ENCODE measurements at regions of chr10 and their contacts with region 1.

Region 1: GRCh38 chr10:101214446-101215396 is 14.5 kb downstream of the LBX1 start:
- DNase-seq: peak; percentile 75 to 85
- H3K4me3 ChIP-seq: peak overlapping the region; percentile 42
- H3K4me3 Mint-ChIP-seq: peak overlapping the region; percentile 81
- H3K27ac Mint-ChIP-seq: no peak overlapping the region
- H3K4me1 ChIP-seq: peaks cover 9% of the 10 kb centered on the region; the same call in 1 of the 2 replicates
- H3K4me1 Mint-ChIP-seq: peaks cover 6% of the 10 kb centered on the region
- H3K27me3 ChIP-seq: peaks cover 1% of the 10 kb centered on the region; the same call in 1 of the 2 replicates
- H3K27me3 Mint-ChIP-seq: peaks cover 25% of the 10 kb centered on the region
- CTCF ChIP-seq: peak; percentile 93 to 98

Region 2: DNA sequence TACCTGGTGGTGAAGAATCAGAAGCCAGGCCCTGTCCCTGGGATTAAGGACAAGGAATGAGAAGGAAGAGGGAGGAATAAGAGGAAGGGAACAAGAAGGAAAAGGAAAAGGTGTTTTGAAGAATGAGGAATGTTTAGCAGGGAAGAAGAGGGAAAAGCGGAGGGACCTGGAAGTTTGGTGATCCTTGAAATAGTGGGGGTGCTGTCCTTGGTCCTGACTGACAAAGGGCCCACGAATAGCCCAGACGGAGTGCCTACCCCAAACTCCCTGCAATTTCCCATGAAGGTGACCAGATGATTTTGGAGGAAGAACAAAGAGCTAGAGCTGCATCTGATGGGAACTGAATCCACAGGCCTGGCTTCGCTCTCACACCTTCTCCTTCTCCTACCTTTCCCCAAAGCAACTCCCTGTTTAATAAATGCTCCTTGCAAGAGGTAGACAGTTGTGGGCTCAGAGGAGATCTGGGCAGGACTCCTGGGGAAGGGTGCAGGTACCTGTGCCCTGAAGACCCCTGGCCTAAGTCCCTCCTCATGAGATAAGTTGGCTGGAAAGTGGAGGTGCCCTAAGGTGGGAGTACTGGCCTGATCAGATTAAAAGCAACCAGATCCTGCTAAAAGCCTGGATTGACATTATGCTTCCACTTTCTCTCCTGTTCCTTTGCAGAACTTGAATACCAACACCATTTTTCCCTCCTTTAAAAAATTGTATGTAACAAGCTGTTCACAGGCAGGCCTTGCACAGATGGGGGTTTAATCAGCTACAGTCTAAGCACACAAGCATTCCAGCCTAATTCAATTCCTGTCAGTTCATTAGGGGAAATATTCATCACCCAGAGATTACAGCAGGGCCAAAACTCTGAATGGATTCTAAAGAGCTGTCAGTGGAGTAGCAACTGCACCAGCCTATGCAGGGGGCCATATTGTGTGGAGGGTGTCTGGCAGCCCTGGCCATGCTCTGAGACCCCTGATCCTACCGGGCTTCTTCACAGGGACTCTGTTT is 133.5 kb before region 1 on chr10:
- CTCF ChIA-PET with region 1: no interaction called
- POLR2A ChIA-PET with region 1: no interaction called
- intact Hi-C with region 1: no loop called
- DNase-seq: peak in 1 of 2 experiments; percentile 63
- H3K4me3 ChIP-seq: no peak overlapping the region
- H3K4me3 Mint-ChIP-seq: no peak overlapping the region
- H3K27ac Mint-ChIP-seq: no peak overlapping the region
- H3K4me1 ChIP-seq: no peaks in the 10 kb centered on the region
- H3K4me1 Mint-ChIP-seq: no peaks in the 10 kb centered on the region
- H3K27me3 ChIP-seq: no peaks in the 10 kb centered on the region; the same call in 1 of the 2 replicates
- H3K27me3 Mint-ChIP-seq: peaks cover 9% of the 10 kb centered on the region
- CTCF ChIP-seq: no peak

Region 3: GRCh38 chr10:101161494-101162299 is 53.0 kb before region 1 on chr10:
- CTCF ChIA-PET with region 1: interaction called, 4 read pairs
- POLR2A ChIA-PET with region 1: no interaction called
- intact Hi-C with region 1: loop called (anchors 1 kb)
- DNase-seq: peak; percentile 63 to 79
- H3K4me3 ChIP-seq: no peak overlapping the region
- H3K4me3 Mint-ChIP-seq: no peak overlapping the region
- H3K27ac Mint-ChIP-seq: no peak overlapping the region
- H3K4me1 ChIP-seq: peaks cover 13% of the 10 kb centered on the region
- H3K4me1 Mint-ChIP-seq: peaks cover 7% of the 10 kb centered on the region
- H3K27me3 ChIP-seq: no peaks in the 10 kb centered on the region; the same call in 1 of the 2 replicates
- H3K27me3 Mint-ChIP-seq: peaks cover 13% of the 10 kb centered on the region
- CTCF ChIP-seq: peak; percentile 96 to 97

Region 4: GRCh38 chr10:101291331-101292193 is 76.8 kb after region 1 on chr10:
- CTCF ChIA-PET with region 1: interaction called, 26 read pairs
- POLR2A ChIA-PET with region 1: interaction called, 6 read pairs
- intact Hi-C with region 1: loop called (anchors 1 kb)
- DNase-seq: peak; percentile 67 to 73
- H3K4me3 ChIP-seq: peak overlapping the region; percentile 45
- H3K4me3 Mint-ChIP-seq: peak overlapping the region; percentile 69
- H3K27ac Mint-ChIP-seq: no peak overlapping the region
- H3K4me1 ChIP-seq: peaks cover 4% of the 10 kb centered on the region; the same call in 1 of the 2 replicates
- H3K4me1 Mint-ChIP-seq: no peaks in the 10 kb centered on the region
- H3K27me3 ChIP-seq: peaks cover 5% of the 10 kb centered on the region
- H3K27me3 Mint-ChIP-seq: peaks cover 22% of the 10 kb centered on the region
- CTCF ChIP-seq: peak; percentile 85 to 92

Region 5: DNA sequence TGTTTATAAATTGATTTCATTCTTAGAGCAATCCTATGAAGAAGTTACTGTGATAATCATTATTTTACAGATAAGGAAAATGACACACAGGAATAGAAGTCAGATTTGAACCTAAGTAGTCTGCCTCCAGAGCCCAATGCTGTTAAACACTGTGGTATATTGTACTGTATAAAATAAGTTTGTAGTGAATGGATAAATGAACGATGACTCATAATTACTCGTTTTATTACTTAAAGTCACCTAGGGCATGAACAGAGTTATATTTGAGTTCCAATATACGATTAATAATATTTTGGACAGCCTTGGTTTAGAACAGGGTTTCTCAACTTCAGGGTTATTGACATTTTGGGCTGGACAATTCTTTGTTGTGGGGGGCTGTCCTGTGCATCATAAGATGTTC is 131.5 kb after region 1 on chr10:
- CTCF ChIA-PET with region 1: no interaction called
- POLR2A ChIA-PET with region 1: no interaction called
- intact Hi-C with region 1: no loop called
- DNase-seq: no peak
- H3K4me3 ChIP-seq: no peak overlapping the region
- H3K4me3 Mint-ChIP-seq: no peak overlapping the region
- H3K27ac Mint-ChIP-seq: no peak overlapping the region
- H3K4me1 ChIP-seq: no peaks in the 10 kb centered on the region
- H3K4me1 Mint-ChIP-seq: no peaks in the 10 kb centered on the region
- H3K27me3 ChIP-seq: no peaks in the 10 kb centered on the region
- H3K27me3 Mint-ChIP-seq: peaks cover 13% of the 10 kb centered on the region
- CTCF ChIP-seq: no peak

Region 6: GRCh38 chr10:101441541-101442455 is 227.1 kb after region 1 on chr10:
- CTCF ChIA-PET with region 1: interaction called, 15 read pairs
- POLR2A ChIA-PET with region 1: no interaction called
- intact Hi-C with region 1: loop called (anchors 1 kb)
- DNase-seq: peak; percentile 53 to 68
- H3K4me3 ChIP-seq: no peak overlapping the region
- H3K4me3 Mint-ChIP-seq: no peak overlapping the region
- H3K27ac Mint-ChIP-seq: no peak overlapping the region
- H3K4me1 ChIP-seq: no peaks in the 10 kb centered on the region
- H3K4me1 Mint-ChIP-seq: no peaks in the 10 kb centered on the region
- H3K27me3 ChIP-seq: no peaks in the 10 kb centered on the region
- H3K27me3 Mint-ChIP-seq: no peaks in the 10 kb centered on the region
- CTCF ChIP-seq: peak in 1 of 2 experiments; percentile 76

Region 7: DNA sequence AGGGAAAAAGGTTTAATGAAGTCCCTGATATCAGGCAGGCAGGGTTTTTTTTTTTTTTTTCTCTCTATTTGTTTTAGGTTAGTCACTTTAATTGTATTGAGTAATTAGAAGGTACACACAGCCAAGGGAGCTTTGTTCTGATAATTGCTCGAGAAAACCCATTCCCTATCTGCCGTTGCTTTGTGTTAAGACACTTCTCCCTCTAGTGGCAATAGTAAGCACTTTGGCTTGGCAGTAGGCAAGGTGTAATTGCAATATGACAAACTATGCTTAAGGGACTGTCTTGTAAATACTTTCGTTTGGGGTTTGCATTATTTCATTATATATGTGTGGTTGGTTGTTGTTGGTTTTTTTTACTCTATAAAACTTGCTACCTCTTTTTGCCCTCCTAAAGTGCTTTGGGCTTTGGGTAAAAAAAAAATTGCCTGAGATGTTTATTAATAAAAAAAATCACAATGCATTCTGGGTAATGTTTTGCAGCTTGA is 252.6 kb after region 1 on chr10:
- CTCF ChIA-PET with region 1: interaction called, 13 read pairs
- POLR2A ChIA-PET with region 1: no interaction called
- intact Hi-C with region 1: loop called (anchors 1 kb)
- DNase-seq: peak; percentile 51 to 56
- H3K4me3 ChIP-seq: no peak overlapping the region
- H3K4me3 Mint-ChIP-seq: no peak overlapping the region
- H3K27ac Mint-ChIP-seq: no peak overlapping the region
- H3K4me1 ChIP-seq: no peaks in the 10 kb centered on the region
- H3K4me1 Mint-ChIP-seq: no peaks in the 10 kb centered on the region
- H3K27me3 ChIP-seq: no peaks in the 10 kb centered on the region
- H3K27me3 Mint-ChIP-seq: no peaks in the 10 kb centered on the region
- CTCF ChIP-seq: peak; percentile 84 to 90

Region 8: DNA sequence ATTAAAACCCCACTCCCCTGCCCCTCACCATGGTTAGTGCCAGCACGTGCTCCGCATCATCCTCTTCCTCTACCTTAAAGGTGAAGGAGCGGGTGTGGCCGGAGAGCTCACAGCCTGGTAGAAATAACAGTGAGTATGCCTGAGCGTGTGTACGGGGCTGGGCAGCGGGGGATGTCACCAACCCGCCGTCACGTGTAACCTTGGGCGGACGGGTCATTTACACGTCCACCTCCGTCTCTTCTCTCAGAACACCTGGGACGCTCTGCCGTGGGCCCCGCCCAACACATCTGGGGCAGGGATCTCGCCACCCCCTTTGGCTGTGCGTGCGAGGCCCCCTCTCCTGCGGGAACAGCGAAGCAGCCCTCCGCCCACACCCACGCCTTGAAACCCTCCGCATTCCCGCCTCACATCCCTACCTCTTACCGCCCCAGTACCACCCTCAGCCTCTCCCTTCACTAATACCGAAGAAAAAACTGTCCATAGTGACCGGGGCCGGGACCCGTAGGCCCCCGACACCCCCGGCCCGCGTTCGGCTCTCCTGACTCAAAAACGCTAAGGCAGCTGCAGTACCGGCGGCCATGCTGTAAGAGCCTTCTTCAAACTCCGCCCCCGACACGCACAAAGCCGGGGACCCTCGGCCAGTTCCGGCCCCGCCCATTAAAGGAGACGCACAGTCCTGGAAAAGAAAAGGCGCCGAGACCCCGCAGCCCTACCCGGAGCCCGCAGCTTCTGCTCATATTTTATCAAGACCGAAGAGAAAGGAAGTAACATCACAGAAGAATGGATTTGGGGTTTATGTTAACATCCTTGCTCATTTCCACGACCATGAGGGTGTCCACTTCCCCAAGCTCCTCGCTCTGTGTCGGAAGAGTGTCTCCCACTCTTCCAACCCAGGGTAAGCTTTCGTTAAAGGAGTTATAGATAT is 568.4 kb after region 1 on chr10 and contains the start of gene NPM3:
- CTCF ChIA-PET with region 1: interaction called, 9 read pairs
- POLR2A ChIA-PET with region 1: no interaction called
- intact Hi-C with region 1: loop called (anchors 2 kb)
- DNase-seq: peak; percentile 87 to 89
- H3K4me3 ChIP-seq: peak within 1 kb of the TSS; percentile 96
- H3K4me3 Mint-ChIP-seq: peak within 1 kb of the TSS; percentile 93
- H3K27ac Mint-ChIP-seq: peak within 1 kb of the TSS; percentile 97
- H3K4me1 ChIP-seq: peaks cover 10% of the 10 kb centered on the region
- H3K4me1 Mint-ChIP-seq: peaks cover 8% of the 10 kb centered on the region
- H3K27me3 ChIP-seq: no peaks in the 10 kb centered on the region
- H3K27me3 Mint-ChIP-seq: no peaks in the 10 kb centered on the region
- CTCF ChIP-seq: no peak
- total RNA-seq, gene NPM3: 92.6 and 103 TPM in 2 replicates

Measured in Caco-2 (cell line).